Activated CD4-positive, alpha-beta T cell treated with anti-CD3 and anti-CD28 coated beads for 36 hours (primary cell): ENCODE measurements at regions of chr4 and their contacts with region 1.

Region 1: GRCh38 chr4:123421227-123421936 is 24.8 kb downstream of the SPRY1 start:
- DNase-seq: no peak
- ATAC-seq: peak; percentile 7
- H3K4me3 Mint-ChIP-seq: peak overlapping the region; percentile 60
- H3K27ac Mint-ChIP-seq: peak overlapping the region; percentile 97
- H3K4me1 Mint-ChIP-seq: peaks cover 68% of the 10 kb centered on the region
- H3K27me3 Mint-ChIP-seq: peaks cover 2% of the 10 kb centered on the region

Region 2: DNA sequence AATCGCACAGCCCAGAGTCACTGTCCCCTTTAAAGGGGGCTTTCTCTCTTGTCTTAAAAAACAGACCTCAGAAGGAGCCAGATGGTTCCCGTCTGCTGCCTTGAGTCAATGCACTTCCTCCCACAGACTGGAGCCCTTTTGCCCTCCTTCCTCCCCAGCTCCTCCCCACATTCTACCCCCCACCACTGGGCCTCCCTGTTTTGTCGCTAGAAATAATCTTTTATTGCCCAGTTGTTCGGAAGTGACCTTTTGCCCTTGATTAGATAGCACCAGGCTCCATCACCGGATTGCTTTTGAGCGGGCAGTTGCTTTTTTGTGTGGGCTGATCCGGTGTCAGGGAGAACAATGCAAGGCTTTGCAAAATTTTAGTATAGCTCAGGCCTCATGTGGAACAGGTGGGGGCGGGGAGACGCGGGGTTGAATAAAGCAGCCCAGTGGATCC is 22.9 kb after region 1 on chr4:
- CTCF ChIA-PET with region 1: no interaction called
- POLR2A ChIA-PET with region 1: no interaction called
- intact Hi-C with region 1: loop called (anchors 1 to 2 kb)
- DNase-seq: peak; percentile 66
- ATAC-seq: peak; percentile 77
- H3K4me3 Mint-ChIP-seq: peak overlapping the region; percentile 47
- H3K27ac Mint-ChIP-seq: peak overlapping the region; percentile 76
- H3K4me1 Mint-ChIP-seq: peaks cover 19% of the 10 kb centered on the region
- H3K27me3 Mint-ChIP-seq: no peaks in the 10 kb centered on the region

Region 3: GRCh38 chr4:123505095-123506010 is 84.0 kb after region 1 on chr4:
- CTCF ChIA-PET with region 1: no interaction called
- POLR2A ChIA-PET with region 1: no interaction called
- intact Hi-C with region 1: no loop called
- DNase-seq: peak; percentile 42
- ATAC-seq: peak; percentile 58
- H3K4me3 Mint-ChIP-seq: peak overlapping the region; percentile 67
- H3K27ac Mint-ChIP-seq: peak overlapping the region; percentile 58
- H3K4me1 Mint-ChIP-seq: peaks cover 8% of the 10 kb centered on the region
- H3K27me3 Mint-ChIP-seq: peaks cover 26% of the 10 kb centered on the region

Region 4: DNA sequence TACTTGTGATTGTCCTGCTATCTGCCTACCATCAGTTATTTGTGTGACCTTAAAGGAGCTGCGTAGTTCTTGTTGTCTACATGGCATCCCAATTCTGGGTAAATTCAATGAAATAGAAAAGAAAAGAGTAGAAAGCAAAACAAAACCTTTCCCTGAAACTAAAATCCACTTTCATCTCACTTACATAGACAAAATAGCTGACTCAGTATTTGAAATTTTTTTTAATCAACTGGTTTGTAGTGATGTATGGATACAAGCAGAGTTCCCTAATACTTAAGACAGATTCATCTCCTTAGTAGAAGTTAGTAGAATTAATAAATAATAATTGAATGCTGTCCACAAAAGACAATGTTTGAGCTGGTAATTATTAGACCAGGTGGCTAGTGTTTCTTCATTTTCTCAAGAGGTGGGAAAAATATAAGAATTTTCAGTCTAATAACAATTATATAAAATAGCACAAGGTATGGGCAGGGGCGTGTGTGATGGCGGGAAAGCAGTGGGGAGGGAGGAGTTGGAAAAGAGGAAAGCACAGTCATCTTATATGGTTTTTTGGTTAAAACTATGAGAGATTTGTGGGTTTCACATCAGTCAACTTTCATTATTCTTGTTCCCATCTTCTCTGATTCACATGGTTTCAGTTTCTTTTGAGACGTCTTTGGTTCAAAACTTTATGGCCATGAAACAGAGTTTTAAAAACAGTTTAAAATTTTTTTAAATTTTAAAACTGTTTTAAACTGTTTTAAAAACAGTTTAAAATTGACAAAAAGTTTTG is 250.4 kb after region 1 on chr4:
- CTCF ChIA-PET with region 1: interaction called, 3 read pairs
- POLR2A ChIA-PET with region 1: no interaction called
- intact Hi-C with region 1: loop called in 1 of 2 experiments (anchors 5 kb)
- DNase-seq: peak; percentile 60
- ATAC-seq: peak; percentile 79
- H3K4me3 Mint-ChIP-seq: no peak overlapping the region
- H3K27ac Mint-ChIP-seq: no peak overlapping the region
- H3K4me1 Mint-ChIP-seq: peaks cover 30% of the 10 kb centered on the region
- H3K27me3 Mint-ChIP-seq: peaks cover 51% of the 10 kb centered on the region

Region 5: GRCh38 chr4:124530464-124531077 is 1109.2 kb after region 1 on chr4:
- CTCF ChIA-PET with region 1: no interaction called
- POLR2A ChIA-PET with region 1: no interaction called
- intact Hi-C with region 1: no loop called
- DNase-seq: no peak
- ATAC-seq: no peak
- H3K4me3 Mint-ChIP-seq: no peak overlapping the region
- H3K27ac Mint-ChIP-seq: no peak overlapping the region
- H3K4me1 Mint-ChIP-seq: no peaks in the 10 kb centered on the region
- H3K27me3 Mint-ChIP-seq: no peaks in the 10 kb centered on the region